ENCODE measurements at regions of chr11 and their contacts with region 1.

Region 1: DNA sequence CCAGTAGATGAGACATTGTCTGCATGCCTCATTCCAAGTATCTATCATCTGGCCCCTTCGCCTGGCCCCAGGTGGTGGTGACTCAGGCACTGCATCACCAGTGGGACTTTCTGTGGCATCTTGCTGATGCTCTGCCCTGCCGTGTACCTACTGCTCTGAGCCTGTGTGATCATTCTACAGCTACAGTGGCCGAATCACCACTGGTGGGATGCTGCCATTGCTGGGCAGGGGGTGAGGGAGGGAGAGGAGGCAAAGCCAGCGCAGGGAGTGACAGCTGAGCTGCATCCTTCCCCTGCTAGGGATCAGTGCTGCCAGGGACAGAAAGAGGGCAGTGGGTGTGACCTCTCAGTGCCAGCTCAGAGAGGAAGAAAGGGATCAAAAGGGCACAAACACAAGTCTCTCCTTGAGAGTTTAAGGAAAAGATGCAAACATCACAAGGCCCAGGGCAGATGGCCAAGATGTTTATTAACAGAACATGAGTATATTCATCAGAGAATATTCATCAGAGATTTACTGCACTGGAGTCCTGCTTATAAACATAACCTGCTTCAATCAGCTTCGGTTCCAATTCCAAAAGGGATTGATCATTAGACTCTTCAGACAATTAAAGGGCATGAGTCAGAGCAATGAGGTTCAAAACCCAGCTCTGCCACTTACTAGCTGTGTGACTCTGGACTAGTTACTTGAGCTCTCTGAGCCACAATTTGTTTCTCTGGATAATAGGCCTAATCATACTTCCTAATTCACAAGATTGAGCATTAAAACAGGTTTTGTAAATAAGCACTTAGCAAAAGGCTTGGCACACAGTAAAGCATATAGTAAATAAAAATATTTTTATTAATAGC is 109.8 kb downstream of the NAT10 start:
- DNase-seq: peak; percentile 74
- H3K27ac ChIP-seq: peak overlapping the region; percentile 58
- CTCF ChIP-seq: no peak

Region 2: GRCh38 chr11:34226210-34226609 is 11.0 kb after region 1 on chr11:
- CTCF ChIA-PET with region 1: interaction called, 12 read pairs
- POLR2A ChIA-PET with region 1: no interaction called
- DNase-seq: no peak
- H3K27ac ChIP-seq: no peak overlapping the region
- CTCF ChIP-seq: no peak

Region 3: DNA sequence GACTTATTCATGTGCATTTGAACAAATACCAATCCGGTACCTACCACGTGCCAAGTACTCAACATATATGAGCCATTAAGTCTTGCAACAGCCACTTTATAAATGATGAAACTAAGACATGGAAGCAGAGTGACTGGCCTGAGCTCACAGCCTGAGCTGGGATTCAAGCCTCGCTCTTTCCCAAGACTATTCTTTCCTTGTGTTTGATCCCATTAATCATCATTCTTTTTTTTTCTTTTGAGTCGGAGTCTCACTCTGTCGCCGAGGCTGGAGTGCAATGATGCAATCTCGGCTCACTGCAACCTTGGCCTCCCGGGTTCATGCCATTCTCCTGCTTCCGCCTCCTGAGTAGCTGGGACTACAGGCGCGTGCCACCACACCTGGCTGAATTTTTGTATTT is 23.4 kb after region 1 on chr11:
- CTCF ChIA-PET with region 1: no interaction called
- POLR2A ChIA-PET with region 1: no interaction called
- DNase-seq: peak; percentile 27
- H3K27ac ChIP-seq: peak overlapping the region; percentile 77
- CTCF ChIP-seq: no peak

Measured in RWPE1 (cell line).